ENCODE measurements at regions of chr16 and their contacts with region 1.

Region 1: DNA sequence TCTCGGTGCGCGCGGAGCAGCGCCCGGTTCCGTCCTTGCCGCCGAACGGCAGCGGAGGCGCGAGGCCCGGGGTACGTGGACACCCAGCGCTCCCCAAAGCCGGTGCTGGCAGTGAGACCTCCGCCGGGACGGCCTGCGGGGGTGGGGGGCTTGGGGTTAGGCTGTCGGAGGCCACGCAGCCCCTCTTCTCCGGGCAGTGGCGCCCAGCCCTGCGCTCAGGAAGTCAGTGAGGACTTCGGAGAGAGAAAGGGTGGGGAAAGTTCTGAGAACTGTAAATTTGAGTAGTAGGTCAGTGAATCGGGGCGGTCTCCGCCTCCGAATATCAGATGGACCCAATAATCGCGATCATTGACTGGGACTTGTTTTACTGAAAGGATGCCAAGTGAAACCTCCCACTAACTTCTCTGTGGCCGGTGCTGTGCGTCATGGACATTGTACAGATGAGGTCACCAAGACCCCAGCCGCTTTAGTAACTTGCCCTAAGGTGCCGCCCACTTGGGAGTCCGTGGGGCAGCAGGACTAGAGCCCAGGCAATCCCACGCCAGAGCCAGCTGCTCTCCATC is 468 bp downstream of the IL4R start:
- DNase-seq: no peak
- ATAC-seq: peak; percentile 56
- H3K4me3 ChIP-seq: peak overlapping the region; percentile 80
- H3K27ac ChIP-seq: peak overlapping the region; percentile 82
- H3K4me1 ChIP-seq: peaks cover 30% of the 10 kb centered on the region
- H3K27me3 ChIP-seq: 0 out of 4 replicates have a peak, but pooled peaks cover 0 to 2% of the 10 kb centered on the region in 2 experiments
- CTCF ChIP-seq: no peak
- EP300 ChIP-seq: no peak; a peak in 1 of 4 replicates
- POLR2A ChIP-seq: peak; percentile 38; the same call in 1 of the 2 replicates
- RAD21 ChIP-seq: no peak

Region 2: GRCh38 chr16:26905336-26905735 is 408.9 kb before region 1 on chr16:
- CTCF ChIA-PET with region 1: no interaction called
- POLR2A ChIA-PET with region 1: no interaction called
- RAD21 ChIA-PET with region 1: no interaction called
- SMC1A ChIA-PET with region 1: no interaction called
- in situ Hi-C with region 1: no loop called
- intact Hi-C with region 1: no loop called
- DNase-seq: no peak
- ATAC-seq: no peak
- H3K4me3 ChIP-seq: no peak overlapping the region
- H3K27ac ChIP-seq: no peak overlapping the region
- H3K4me1 ChIP-seq: no peaks in the 10 kb centered on the region
- H3K27me3 ChIP-seq: no peaks in the 10 kb centered on the region
- CTCF ChIP-seq: no peak
- EP300 ChIP-seq: no peak
- POLR2A ChIP-seq: no peak
- RAD21 ChIP-seq: no peak

Region 3: GRCh38 chr16:27203429-27204231 is 110.6 kb before region 1 on chr16 and contains the start of gene KDM8:
- CTCF ChIA-PET with region 1: interaction called, 3 read pairs
- POLR2A ChIA-PET with region 1: interaction called, 11 read pairs
- RAD21 ChIA-PET with region 1: interaction called, 4 read pairs
- SMC1A ChIA-PET with region 1: interaction called, 7 read pairs
- in situ Hi-C with region 1: no loop called
- intact Hi-C with region 1: no loop called
- DNase-seq: peak; percentile 99
- ATAC-seq: peak; percentile 90
- H3K4me3 ChIP-seq: peak within 1 kb of the TSS; percentile 80
- H3K27ac ChIP-seq: peak within 1 kb of the TSS; percentile 97
- H3K4me1 ChIP-seq: peaks cover 25% of the 10 kb centered on the region
- H3K27me3 ChIP-seq: no peaks in the 10 kb centered on the region
- CTCF ChIP-seq: no peak
- EP300 ChIP-seq: no peak
- POLR2A ChIP-seq: peak; percentile 88
- RAD21 ChIP-seq: no peak
- polyA plus RNA-seq, gene KDM8: 0.79 to 1.3 TPM

Region 4: DNA sequence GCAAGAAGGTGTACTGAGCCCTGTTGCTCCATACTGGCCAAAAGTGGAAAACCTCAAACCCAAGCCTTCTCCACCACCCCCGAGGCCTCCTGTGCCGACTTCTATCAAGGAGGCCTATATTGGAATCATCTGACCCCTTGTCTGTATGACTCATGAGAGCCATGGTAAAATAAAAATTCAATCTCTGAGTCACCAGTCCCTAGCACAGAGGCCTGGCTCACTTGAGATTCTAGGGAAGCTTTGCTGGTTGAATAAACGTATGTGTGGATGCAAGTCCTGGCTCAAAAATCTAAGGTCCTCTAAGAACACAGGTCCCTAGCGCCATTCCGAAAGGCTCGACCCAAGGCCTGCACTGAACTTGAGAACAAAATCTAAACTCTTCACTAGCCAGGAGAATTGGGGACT is 60.7 kb before region 1 on chr16:
- CTCF ChIA-PET with region 1: interaction called, 5 read pairs
- POLR2A ChIA-PET with region 1: interaction called, 5 read pairs
- RAD21 ChIA-PET with region 1: interaction called, 5 read pairs
- SMC1A ChIA-PET with region 1: interaction called, 10 read pairs
- in situ Hi-C with region 1: no loop called
- intact Hi-C with region 1: no loop called
- DNase-seq: no peak
- ATAC-seq: peak; percentile 27
- H3K4me3 ChIP-seq: no peak overlapping the region
- H3K27ac ChIP-seq: peak overlapping the region; percentile 74
- H3K4me1 ChIP-seq: peaks cover 25% of the 10 kb centered on the region
- H3K27me3 ChIP-seq: no peaks in the 10 kb centered on the region
- CTCF ChIP-seq: no peak
- EP300 ChIP-seq: no peak
- POLR2A ChIP-seq: no peak
- RAD21 ChIP-seq: no peak

Region 5: DNA sequence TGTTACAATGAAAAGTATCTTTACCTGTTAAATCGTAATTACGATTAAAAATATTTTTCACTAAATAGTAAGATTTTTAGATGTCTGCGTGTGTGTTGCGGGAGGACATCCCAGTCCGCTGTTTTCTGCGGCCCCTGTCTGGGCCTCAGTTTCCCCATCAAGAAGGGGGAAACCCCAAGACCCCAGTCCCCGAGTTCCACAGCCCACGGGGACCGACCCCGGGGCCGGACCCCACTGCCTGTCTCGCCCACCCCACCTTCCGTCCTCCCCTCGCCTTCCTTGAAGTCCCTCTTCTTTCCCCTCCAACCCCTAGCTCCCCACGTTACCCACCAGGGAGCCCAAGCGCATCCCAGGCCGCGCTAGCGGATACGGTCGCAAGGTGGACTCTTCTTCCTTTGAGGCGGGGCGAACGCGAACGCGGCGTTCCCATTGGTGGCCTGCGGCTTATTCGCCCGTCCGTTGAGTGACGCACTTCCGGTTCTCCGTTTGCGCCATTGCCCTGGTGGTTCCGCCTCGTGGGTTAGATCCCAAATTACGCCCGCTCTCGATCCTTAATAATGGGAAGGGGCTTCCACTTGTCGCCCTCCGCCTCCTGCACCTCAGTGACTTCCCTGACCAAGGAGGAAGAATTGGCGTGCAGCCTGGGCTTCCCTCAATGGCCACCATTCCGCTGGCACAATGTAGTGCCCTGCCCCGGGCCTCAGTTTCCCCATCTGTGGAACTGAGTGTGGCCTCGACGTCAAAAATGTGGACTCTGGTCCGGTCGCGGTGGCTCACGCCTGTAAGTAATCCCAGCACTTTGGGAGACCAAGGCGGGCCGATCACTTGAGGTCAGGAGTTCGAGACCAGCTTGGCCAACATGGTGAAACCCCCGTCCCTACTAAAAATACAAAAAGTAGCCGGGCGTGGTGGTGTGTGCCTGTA is 45.6 kb before region 1 on chr16 and contains the start of gene NSMCE1:
- CTCF ChIA-PET with region 1: interaction called, 4 read pairs
- POLR2A ChIA-PET with region 1: interaction called, 15 read pairs
- RAD21 ChIA-PET with region 1: interaction called, 18 read pairs
- SMC1A ChIA-PET with region 1: interaction called, 62 read pairs
- in situ Hi-C with region 1: no loop called
- intact Hi-C with region 1: loop called (anchors 5 kb)
- DNase-seq: peak; percentile 84
- ATAC-seq: peak; percentile 95
- H3K4me3 ChIP-seq: peak within 1 kb of the TSS; percentile 81
- H3K27ac ChIP-seq: peak within 1 kb of the TSS; percentile 79
- H3K4me1 ChIP-seq: peaks cover 4% of the 10 kb centered on the region
- H3K27me3 ChIP-seq: no peaks in the 10 kb centered on the region
- CTCF ChIP-seq: peak; percentile 12 to 42 (median 13); a peak in 2 of 6 replicates
- EP300 ChIP-seq: 0 out of 4 replicates have a peak, but pooled peaks have one; percentile 21 to 25
- POLR2A ChIP-seq: peak; percentile 96
- RAD21 ChIP-seq: no peak
- polyA plus RNA-seq, gene NSMCE1: 168 to 214 TPM

Region 6: GRCh38 chr16:27273670-27274423 is 40.4 kb before region 1 on chr16:
- CTCF ChIA-PET with region 1: interaction called, 4 read pairs
- POLR2A ChIA-PET with region 1: interaction called, 15 read pairs
- RAD21 ChIA-PET with region 1: interaction called, 18 read pairs
- SMC1A ChIA-PET with region 1: interaction called, 62 read pairs
- in situ Hi-C with region 1: no loop called
- intact Hi-C with region 1: loop called (anchors 5 kb)
- DNase-seq: no peak
- ATAC-seq: peak; percentile 82
- H3K4me3 ChIP-seq: no peak overlapping the region
- H3K27ac ChIP-seq: no peak overlapping the region
- H3K4me1 ChIP-seq: peaks cover 16% of the 10 kb centered on the region
- H3K27me3 ChIP-seq: no peaks in the 10 kb centered on the region
- CTCF ChIP-seq: no peak
- EP300 ChIP-seq: 0 out of 4 replicates have a peak, but pooled peaks of 1 of the 2 experiments have one; percentile 17
- POLR2A ChIP-seq: no peak
- RAD21 ChIP-seq: no peak

Region 7: GRCh38 chr16:27286451-27286850 is 27.8 kb before region 1 on chr16:
- CTCF ChIA-PET with region 1: interaction called, 19 read pairs
- POLR2A ChIA-PET with region 1: interaction called, 5 read pairs
- RAD21 ChIA-PET with region 1: interaction called, 6 read pairs
- SMC1A ChIA-PET with region 1: interaction called, 26 read pairs
- in situ Hi-C with region 1: no loop called
- intact Hi-C with region 1: no loop called
- DNase-seq: no peak
- ATAC-seq: no peak
- H3K4me3 ChIP-seq: no peak overlapping the region
- H3K27ac ChIP-seq: no peak overlapping the region
- H3K4me1 ChIP-seq: peaks cover 40% of the 10 kb centered on the region
- H3K27me3 ChIP-seq: 0 out of 4 replicates have a peak, but pooled peaks cover 0 to 3% of the 10 kb centered on the region in 2 experiments
- CTCF ChIP-seq: no peak
- EP300 ChIP-seq: no peak
- POLR2A ChIP-seq: no peak
- RAD21 ChIP-seq: no peak

Region 8: DNA sequence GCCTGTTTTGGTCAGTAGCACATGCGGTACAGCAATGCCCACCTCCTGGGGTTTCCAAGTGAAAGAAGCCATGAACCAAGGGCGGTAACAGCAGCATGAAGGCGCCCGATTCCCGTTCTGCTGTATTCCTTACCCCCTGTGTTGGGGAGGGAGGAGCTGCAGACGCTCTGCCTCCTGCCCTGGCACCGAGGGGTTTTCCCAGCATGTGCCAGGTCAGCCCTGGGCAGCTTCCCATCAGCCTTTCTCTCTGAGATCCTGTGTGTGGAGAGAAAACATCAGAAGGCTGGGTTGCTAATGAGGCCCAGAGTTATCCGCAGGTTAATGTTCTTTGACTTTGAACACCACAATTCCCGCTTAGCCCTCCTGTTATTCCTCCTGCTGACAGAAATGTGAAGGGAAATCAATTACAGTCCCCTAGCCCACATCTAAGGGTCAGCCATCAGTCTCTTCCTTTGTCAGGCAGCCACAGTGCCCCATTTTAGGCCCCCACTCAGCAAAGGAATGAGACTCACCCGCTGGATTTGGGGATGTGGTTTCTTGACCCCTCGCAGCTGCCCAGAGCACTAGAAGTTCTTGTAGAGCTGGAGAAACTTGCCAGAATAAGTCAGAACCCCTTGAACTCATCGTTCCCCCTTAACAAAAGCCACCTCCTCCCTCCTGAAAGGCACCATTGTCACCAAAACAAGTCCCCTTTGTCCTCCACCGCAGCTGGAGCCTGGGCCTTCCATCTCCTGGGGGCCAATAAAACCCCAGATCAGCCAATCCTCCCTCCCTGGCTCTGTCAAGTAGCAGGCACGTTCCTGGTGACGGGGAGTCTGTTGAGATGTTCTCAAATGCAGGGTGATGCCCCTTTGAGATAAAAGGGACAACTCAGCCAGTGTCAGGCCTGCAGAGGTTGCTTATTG is 404.2 kb after region 1 on chr16:
- CTCF ChIA-PET with region 1: no interaction called
- POLR2A ChIA-PET with region 1: no interaction called
- RAD21 ChIA-PET with region 1: no interaction called
- SMC1A ChIA-PET with region 1: no interaction called
- in situ Hi-C with region 1: no loop called
- intact Hi-C with region 1: no loop called
- DNase-seq: no peak
- ATAC-seq: no peak
- H3K4me3 ChIP-seq: no peak overlapping the region
- H3K27ac ChIP-seq: no peak overlapping the region
- H3K4me1 ChIP-seq: no peaks in the 10 kb centered on the region
- H3K27me3 ChIP-seq: no peaks in the 10 kb centered on the region
- CTCF ChIP-seq: no peak
- EP300 ChIP-seq: no peak
- POLR2A ChIP-seq: no peak
- RAD21 ChIP-seq: no peak